AG04450 (cell line): ENCODE measurements at regions of chr20 and their contacts with region 1.

Region 1: DNA sequence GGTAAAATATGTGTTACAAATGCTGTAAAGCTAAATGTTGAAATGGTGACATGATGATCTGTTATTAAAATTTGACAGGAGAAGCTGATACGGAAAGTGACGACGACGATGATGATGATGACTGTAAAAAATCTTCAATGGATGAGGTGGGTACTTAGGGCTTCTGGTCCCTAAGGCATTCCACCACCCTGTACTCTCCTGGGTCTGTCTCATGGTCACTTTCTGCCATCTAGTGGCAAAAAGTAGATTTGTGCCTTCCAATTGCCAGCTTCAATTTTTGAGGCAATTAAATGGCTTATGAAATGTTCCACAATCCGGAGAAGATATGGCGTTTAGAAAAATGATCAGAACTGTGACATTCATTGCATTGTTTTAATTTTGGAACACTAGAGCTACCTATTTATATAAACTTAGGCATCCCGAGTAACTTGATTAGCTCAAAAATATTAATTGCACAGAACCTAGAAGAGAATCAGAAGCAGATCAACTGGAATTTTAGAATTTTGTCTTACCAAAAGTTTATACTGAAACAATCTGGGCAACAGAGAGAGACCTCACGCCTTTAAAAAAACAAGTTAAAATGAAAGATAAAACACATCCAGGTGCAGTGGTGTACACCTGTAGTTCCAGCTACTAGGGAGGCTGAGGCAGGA is 346.5 kb upstream of the PLCB4 start:
- DNase-seq: peak; percentile 65
- H3K4me3 ChIP-seq: no peak overlapping the region
- H3K27ac ChIP-seq: no peak overlapping the region
- H3K27me3 ChIP-seq: no peaks in the 10 kb centered on the region
- CTCF ChIP-seq: peak; percentile 83

Region 2: DNA sequence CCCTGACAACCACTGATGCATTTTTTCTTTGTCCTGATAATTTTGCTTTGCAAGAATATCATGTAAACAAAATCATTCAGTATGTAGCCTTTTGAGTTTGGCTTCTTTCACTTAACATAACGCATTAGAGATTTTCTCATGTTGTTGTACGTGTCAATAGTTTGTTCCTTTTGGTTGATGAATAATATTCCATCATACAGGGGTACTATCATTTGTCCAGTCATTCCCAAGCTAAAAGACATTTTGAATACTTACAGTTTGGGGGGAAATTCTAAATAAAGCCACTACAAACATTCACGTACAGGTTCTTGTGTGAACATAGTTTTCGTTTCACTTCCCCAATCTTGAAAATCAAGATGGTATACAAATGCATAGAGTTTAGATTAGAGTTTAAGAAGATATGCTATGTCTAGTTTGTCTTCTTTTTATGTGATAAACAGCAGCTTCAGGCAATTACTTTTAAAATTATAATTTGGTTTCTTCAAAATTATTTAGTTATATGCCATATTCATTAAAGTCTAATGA is 787.3 kb before region 1 on chr20:
- CTCF ChIA-PET with region 1: interaction called, 323 read pairs
- POLR2A ChIA-PET with region 1: interaction called, 5 read pairs
- DNase-seq: no peak
- H3K4me3 ChIP-seq: no peak overlapping the region
- H3K27ac ChIP-seq: no peak overlapping the region
- H3K27me3 ChIP-seq: peaks cover 3% of the 10 kb centered on the region
- CTCF ChIP-seq: no peak

Region 3: GRCh38 chr20:7989379-7989778 is 733.0 kb before region 1 on chr20:
- CTCF ChIA-PET with region 1: interaction called, 24 read pairs
- POLR2A ChIA-PET with region 1: no interaction called
- DNase-seq: no peak
- H3K4me3 ChIP-seq: no peak overlapping the region
- H3K27ac ChIP-seq: no peak overlapping the region
- H3K27me3 ChIP-seq: no peaks in the 10 kb centered on the region
- CTCF ChIP-seq: no peak

Region 4: DNA sequence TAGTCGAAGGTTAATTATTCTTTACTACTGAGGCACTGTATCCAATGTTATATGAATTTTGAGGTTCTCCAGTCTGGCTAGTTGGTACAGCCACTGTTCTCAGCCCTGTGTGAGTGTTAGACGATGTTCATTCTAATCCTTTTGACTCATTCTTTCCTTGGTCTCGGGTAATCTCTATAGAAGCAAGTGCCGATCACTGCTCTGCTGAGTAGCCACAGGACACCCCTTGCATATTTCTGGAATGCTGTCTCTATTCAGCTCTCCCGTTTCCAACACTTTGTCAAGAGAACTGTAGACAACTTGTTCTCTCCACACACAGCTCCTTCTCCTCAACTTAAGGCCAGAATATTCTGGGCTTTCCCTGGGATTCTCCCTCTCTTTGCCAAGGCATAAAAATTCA is 632.7 kb before region 1 on chr20:
- CTCF ChIA-PET with region 1: interaction called, 10 read pairs
- POLR2A ChIA-PET with region 1: no interaction called
- DNase-seq: no peak
- H3K4me3 ChIP-seq: no peak overlapping the region
- H3K27ac ChIP-seq: no peak overlapping the region
- H3K27me3 ChIP-seq: no peaks in the 10 kb centered on the region
- CTCF ChIP-seq: no peak

Region 5: GRCh38 chr20:8145246-8146168 is 576.9 kb before region 1 on chr20:
- CTCF ChIA-PET with region 1: interaction called, 15 read pairs
- POLR2A ChIA-PET with region 1: no interaction called
- DNase-seq: no peak
- H3K4me3 ChIP-seq: no peak overlapping the region
- H3K27ac ChIP-seq: no peak overlapping the region
- H3K27me3 ChIP-seq: no peaks in the 10 kb centered on the region
- CTCF ChIP-seq: no peak

Region 6: GRCh38 chr20:8535403-8536261 is 186.8 kb before region 1 on chr20:
- CTCF ChIA-PET with region 1: interaction called, 47 read pairs
- POLR2A ChIA-PET with region 1: no interaction called
- DNase-seq: no peak
- H3K4me3 ChIP-seq: no peak overlapping the region
- H3K27ac ChIP-seq: no peak overlapping the region
- H3K27me3 ChIP-seq: no peaks in the 10 kb centered on the region
- CTCF ChIP-seq: peak; percentile 70

Region 7: DNA sequence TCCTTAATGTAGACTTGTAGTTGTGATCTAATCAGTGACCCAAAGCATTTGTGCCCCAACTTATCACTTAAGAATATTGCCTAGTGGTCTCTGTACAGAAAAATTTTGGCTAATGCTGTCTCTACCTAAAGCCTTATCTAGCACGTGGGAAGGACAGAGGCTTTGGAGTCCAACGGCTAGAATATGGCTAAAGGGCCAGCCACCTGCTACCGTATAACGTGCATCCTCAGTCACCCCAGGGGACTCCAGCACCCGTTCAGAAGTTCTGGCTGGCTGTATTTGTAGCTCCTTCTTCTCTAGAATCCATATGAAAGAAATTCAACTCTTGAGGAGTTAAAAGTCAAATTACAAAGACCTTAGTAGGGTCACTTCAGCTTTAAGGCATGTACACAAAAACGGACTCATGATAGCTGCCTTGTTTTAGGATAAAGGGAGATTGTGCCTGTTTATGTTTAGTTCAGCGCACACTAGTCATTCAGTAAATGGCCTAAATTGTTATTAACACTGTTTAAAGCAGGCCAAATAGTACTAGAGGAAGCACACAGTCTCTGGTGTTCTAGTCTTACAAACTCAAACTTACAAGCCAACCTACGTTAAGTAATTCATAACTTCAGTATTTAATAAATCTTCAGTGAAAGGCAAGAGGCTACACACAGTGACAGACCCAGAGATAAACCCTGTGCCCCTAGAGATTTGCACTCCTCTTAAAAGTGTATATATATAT is 61.0 kb before region 1 on chr20:
- CTCF ChIA-PET with region 1: no interaction called
- POLR2A ChIA-PET with region 1: no interaction called
- DNase-seq: no peak
- H3K4me3 ChIP-seq: no peak overlapping the region
- H3K27ac ChIP-seq: no peak overlapping the region
- H3K27me3 ChIP-seq: no peaks in the 10 kb centered on the region
- CTCF ChIP-seq: no peak

Region 8: DNA sequence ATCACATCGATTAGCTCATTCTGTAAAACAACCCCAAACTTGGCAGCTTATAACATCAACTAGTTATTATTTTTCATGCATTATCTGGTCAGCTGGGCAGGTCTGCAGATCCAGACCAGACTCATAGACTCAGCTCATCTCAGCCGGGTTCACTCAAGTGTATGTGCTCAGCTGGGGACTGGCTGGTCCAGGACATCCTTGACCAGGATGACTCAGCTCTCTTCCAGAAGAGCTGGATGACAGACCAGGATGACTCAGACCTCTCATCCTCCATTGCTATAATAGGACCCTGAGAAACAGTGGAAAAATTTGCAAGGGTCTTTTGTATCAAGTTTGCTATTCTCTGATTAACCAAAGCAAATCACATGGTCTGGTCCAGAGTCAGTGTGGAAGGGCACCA is 34.0 kb after region 1 on chr20:
- CTCF ChIA-PET with region 1: interaction called, 11 read pairs
- POLR2A ChIA-PET with region 1: no interaction called
- DNase-seq: peak; percentile 57
- H3K4me3 ChIP-seq: no peak overlapping the region
- H3K27ac ChIP-seq: no peak overlapping the region
- H3K27me3 ChIP-seq: no peaks in the 10 kb centered on the region
- CTCF ChIP-seq: no peak